Activated CD4-positive, alpha-beta memory T cell treated with anti-CD3 and anti-CD28 coated beads, Interleukin-2, amount 10 ng/mL, durations not matched to agents 7 days and 5 days (primary cell): ENCODE measurements at regions of chr2 and their contacts with region 1.

Region 1: GRCh38 chr2:112726497-112727190 is 5.8 kb downstream of the NT5DC4 start:
- DNase-seq: peak; percentile 93
- H3K4me3 Mint-ChIP-seq: no peak overlapping the region
- H3K27ac Mint-ChIP-seq: peak overlapping the region; percentile 49
- H3K4me1 Mint-ChIP-seq: peaks cover 27% of the 10 kb centered on the region
- H3K27me3 Mint-ChIP-seq: no peaks in the 10 kb centered on the region

Region 2: GRCh38 chr2:112584134-112584890 is 142.3 kb before region 1 on chr2 and contains the start of gene CHCHD5:
- CTCF ChIA-PET with region 1: interaction called, 22 read pairs
- POLR2A ChIA-PET with region 1: no interaction called
- DNase-seq: peak; percentile 97
- H3K4me3 Mint-ChIP-seq: peak within 1 kb of the TSS; percentile 97
- H3K27ac Mint-ChIP-seq: peak within 1 kb of the TSS; percentile 95
- H3K4me1 Mint-ChIP-seq: peaks cover 47% of the 10 kb centered on the region
- H3K27me3 Mint-ChIP-seq: no peaks in the 10 kb centered on the region
- total RNA-seq, gene CHCHD5: 40.0 to 47.5 TPM

Region 3: GRCh38 chr2:112626604-112627059 is 100.0 kb before region 1 on chr2:
- CTCF ChIA-PET with region 1: interaction called, 175 read pairs
- POLR2A ChIA-PET with region 1: interaction called, 8 read pairs
- DNase-seq: peak; percentile 75
- H3K4me3 Mint-ChIP-seq: peak overlapping the region; percentile 49
- H3K27ac Mint-ChIP-seq: peak overlapping the region; percentile 93
- H3K4me1 Mint-ChIP-seq: peaks cover 86% of the 10 kb centered on the region
- H3K27me3 Mint-ChIP-seq: no peaks in the 10 kb centered on the region

Region 4: DNA sequence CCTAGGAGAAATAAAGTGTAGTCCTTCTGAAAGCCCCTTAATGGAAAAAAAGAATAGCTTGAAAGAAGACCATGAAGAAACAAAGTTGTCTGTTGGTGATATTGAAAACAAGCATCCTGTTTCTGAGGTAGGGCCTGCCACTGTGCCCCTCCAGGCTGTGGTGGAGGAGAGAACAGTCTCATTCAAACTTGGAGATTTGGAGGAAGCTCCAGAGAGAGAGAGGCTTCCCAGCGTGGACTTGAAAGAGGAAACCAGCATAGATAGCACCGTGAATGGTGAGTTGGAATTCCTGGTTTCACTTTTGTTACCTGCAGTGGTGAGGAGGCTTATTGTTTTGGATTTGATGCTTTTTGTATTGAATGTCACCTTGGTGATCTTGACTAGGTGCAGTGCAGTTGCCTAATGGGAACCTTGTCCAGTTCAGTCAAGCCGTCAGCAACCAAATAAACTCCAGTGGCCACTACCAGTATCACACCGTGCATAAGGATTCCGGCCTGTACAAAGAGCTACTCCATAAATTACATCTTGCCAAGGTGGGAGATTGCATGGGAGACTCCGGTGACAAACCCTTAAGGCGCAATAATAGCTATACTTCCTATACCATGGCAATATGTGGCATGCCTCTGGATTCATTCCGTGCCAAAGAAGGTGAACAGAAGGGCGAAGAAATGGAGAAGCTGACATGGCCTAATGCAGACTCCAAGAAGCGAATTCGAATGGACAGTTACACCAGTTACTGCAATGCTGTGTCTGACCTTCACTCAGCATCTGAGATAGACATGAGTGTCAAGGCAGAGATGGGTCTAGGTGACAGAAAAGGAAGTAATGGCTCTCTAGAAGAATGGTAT is 67.6 kb before region 1 on chr2:
- CTCF ChIA-PET with region 1: interaction called, 17 read pairs
- POLR2A ChIA-PET with region 1: interaction called, 5 read pairs
- DNase-seq: no peak
- H3K4me3 Mint-ChIP-seq: no peak overlapping the region
- H3K27ac Mint-ChIP-seq: peak overlapping the region; percentile 71
- H3K4me1 Mint-ChIP-seq: peaks cover 77% of the 10 kb centered on the region
- H3K27me3 Mint-ChIP-seq: no peaks in the 10 kb centered on the region

Region 5: DNA sequence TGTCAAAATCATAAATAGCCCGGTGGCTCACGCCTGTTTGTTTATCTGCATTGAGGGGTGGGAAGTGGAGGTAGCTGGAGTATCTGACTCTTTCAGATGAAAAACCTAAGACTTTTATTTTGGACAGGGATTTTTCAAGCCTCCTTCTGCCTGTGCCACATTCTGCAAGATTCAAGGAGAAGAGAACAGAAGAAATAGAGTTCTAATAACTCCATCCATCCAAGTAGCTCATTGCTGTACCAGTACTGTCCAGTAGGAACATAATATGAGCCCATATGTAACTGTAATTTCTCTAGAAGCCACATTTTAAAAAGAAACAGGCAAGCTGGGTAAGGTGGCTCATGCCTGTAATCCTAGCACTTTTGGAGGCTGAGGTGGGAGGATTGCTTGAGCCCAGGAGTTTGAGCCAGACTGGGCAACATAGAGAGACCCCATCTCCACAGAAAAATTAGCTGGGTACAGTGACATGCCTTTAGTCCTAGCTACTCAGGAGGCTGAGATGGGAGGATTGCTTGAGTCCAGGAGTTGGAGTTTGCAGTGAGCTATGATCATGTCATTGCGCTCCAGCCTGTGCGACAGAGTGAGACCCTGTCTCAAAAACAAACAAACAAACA is 41.3 kb before region 1 on chr2:
- CTCF ChIA-PET with region 1: interaction called, 77 read pairs
- POLR2A ChIA-PET with region 1: no interaction called
- DNase-seq: no peak
- H3K4me3 Mint-ChIP-seq: no peak overlapping the region
- H3K27ac Mint-ChIP-seq: no peak overlapping the region
- H3K4me1 Mint-ChIP-seq: peaks cover 36% of the 10 kb centered on the region
- H3K27me3 Mint-ChIP-seq: no peaks in the 10 kb centered on the region

Region 6: DNA sequence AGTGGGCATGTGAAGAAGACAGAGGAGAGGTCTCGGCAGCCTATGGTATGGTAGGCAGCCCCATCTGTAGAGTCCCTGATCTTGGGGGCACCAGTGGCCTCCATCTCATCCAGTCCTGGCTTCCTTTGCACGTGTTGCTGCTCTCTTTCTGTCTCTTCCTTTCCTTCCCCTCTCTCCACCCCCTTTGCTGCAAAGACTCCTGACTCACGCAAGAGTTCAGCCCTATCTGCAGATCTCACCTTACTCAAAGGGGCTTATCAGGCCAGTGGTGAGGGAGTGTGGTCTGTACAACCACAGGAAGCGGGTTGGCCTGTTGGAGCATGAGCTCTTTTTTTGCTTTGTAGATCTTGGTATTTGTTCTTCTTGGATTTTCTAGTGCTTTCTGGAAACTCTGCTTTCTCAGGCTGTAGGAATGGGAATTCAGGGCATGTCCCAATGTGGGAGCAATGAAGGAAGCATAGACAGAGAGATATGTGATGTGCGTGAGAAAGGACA is 20.4 kb before region 1 on chr2:
- CTCF ChIA-PET with region 1: interaction called, 44 read pairs
- POLR2A ChIA-PET with region 1: interaction called, 5 read pairs
- DNase-seq: peak; percentile 93
- H3K4me3 Mint-ChIP-seq: peak overlapping the region; percentile 55
- H3K27ac Mint-ChIP-seq: peak overlapping the region; percentile 82
- H3K4me1 Mint-ChIP-seq: peaks cover 64% of the 10 kb centered on the region
- H3K27me3 Mint-ChIP-seq: peaks cover 3% of the 10 kb centered on the region

Region 7: DNA sequence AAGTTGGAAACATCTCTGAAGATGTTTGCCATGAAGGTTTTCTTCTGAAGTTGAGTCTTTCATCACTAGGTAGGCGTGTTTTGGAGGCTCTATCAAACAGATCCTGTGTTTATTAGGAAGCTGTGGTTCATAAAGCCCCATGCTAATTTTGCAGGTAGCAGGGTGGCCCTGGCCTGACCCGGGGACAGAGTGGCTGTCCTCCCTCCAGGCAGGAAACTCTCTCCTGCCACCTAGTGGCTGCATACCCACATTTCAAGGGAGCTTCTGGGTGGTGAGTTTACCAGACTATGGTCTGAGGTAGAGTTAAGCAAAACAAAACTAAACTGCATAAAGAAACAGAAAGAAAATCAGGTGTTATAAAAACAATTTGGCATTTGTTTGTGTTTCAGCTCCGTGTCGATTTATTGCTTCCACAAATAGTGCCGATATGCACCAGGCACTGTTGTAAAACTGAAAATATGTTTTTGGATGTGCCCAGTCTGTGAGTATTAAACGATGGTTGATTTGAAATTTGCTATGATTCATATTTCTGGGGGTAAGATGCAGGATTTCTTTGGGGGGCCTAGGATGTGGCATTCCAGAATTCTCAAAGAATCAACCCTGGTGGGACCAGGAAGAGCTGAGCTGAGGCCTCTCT is 158.3 kb after region 1 on chr2:
- CTCF ChIA-PET with region 1: interaction called, 17 read pairs
- POLR2A ChIA-PET with region 1: no interaction called
- DNase-seq: peak; percentile 82
- H3K4me3 Mint-ChIP-seq: no peak overlapping the region
- H3K27ac Mint-ChIP-seq: peak overlapping the region; percentile 60
- H3K4me1 Mint-ChIP-seq: peaks cover 46% of the 10 kb centered on the region
- H3K27me3 Mint-ChIP-seq: no peaks in the 10 kb centered on the region